GM10248 (cell line): ENCODE measurements at regions of chr4 and their contacts with region 1.

Region 1: GRCh38 chr4:111678479-111678878 is 466.8 kb upstream of the FAM241A start:
- DNase-seq: no peak
- CTCF ChIP-seq: no peak

Region 2: GRCh38 chr4:111666826-111667360 is 11.6 kb before region 1 on chr4:
- CTCF ChIA-PET with region 1: interaction called, 12 read pairs
- POLR2A ChIA-PET with region 1: no interaction called
- DNase-seq: no peak
- CTCF ChIP-seq: no peak

Region 3: GRCh38 chr4:111761531-111761930 is 83.1 kb after region 1 on chr4:
- CTCF ChIA-PET with region 1: no interaction called
- POLR2A ChIA-PET with region 1: no interaction called
- DNase-seq: no peak
- CTCF ChIP-seq: no peak